Activated naive CD4-positive, alpha-beta T cell treated with anti-CD3 and anti-CD28 coated beads for 36 hours (primary cell): ENCODE measurements at regions of chr12 and their contacts with region 1.

Region 1: GRCh38 chr12:62603061-62603810 is 136.6 kb downstream of the MON2 start:
- DNase-seq: peak; percentile 79
- H3K4me3 Mint-ChIP-seq: peak overlapping the region; percentile 86
- H3K27ac Mint-ChIP-seq: peak overlapping the region; percentile 99
- H3K4me1 Mint-ChIP-seq: peaks cover 35% of the 10 kb centered on the region
- H3K27me3 Mint-ChIP-seq: no peaks in the 10 kb centered on the region

Region 2: DNA sequence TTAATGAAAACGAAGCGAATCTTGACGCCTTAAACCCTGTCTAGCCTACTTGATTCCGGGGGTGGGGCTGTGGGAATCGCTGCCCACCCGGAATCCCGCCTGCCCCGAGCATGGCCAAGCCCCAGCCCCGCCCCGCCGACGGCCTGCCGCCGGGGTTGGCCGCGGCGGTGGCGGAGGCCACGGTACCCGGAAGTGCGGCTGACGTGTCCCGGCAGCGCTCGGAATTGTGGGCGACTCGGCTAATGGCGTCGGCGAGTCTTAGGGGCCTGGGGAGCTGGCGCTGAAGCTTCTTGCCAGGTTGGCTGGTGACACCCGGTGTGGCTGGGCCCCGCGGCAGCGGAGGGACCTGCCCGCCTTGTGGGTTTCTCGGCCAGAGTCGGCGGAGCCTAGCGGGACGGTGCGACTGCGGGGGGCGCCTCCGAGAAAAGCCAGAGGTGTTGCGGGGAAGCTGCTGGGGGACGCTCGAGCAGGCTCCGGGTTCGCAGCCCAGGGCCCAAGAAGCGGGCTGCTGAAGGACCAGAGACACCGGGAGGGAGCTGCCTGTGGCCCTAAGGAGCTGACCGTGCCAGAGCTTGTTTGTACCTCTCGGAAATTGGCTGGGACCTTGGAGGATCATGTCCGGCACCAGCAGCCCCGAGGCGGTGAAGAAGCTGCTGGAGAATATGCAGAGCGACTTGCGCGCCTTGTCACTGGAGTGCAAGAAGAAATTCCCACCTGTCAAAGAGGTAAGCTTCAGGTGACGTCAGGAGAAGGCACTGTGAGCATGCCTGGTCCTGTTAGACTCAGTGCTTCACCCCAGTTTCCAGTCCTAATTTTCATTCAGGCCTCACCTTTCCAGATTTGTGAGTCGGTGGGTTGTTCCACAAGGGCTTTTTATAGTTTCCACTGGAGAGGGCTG is 136.4 kb before region 1 on chr12 and contains the start of gene MON2:
- CTCF ChIA-PET with region 1: no interaction called
- intact Hi-C with region 1: loop called (anchors 1 kb)
- DNase-seq: peak; percentile 87
- H3K4me3 Mint-ChIP-seq: peak within 1 kb of the TSS; percentile 74
- H3K27ac Mint-ChIP-seq: peak within 1 kb of the TSS; percentile 88
- H3K4me1 Mint-ChIP-seq: peaks cover 15% of the 10 kb centered on the region
- H3K27me3 Mint-ChIP-seq: no peaks in the 10 kb centered on the region
- total RNA-seq, gene MON2: 29.2 to 29.8 TPM

Region 3: DNA sequence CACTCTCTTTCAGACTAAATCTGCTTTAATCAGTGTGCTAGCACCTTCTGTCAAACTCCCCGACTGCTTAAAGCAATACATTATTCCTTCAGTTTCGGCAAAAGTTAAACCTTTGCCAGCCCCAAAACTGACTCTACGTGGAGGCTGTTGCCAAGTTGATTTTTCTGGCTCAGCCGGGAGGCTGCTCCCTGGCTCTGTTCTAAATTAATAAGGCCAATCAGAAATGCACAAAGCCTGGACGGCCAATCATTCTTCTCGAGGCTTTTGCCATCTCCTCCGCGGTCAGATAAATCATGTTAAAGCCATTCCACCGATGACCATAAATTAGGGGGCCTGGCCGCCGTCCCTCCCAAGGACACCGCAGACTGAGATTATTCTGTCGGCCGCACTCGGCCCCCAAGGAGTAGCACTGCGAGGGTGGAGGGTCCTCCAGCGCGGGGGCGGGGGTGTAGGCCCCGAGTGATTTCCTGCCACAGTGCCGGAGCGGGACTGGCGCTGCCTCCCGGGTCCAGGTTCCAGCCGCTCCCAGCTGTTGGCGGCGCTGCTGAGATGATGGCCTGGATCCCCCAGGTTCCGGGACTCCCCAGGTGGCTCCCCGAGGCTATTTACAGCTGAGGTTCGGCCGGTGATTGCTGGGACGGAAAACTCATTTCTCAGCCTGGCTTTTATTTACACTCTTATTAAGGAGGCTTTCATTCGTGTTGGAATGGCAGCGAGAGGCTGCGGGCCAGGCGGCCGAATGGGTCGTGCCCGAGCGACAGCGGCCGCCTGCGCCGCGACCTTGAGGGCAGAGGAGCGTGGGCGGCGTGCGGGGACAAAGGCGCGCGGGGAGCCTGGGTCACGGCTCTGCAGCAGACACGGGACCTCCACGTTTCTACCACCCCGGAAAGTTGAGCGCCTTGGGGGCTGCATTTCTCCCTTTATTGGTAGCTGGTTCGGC is 28.5 kb after region 1 on chr12:
- CTCF ChIA-PET with region 1: interaction called, 3 read pairs
- intact Hi-C with region 1: loop called (anchors 2 kb)
- DNase-seq: peak; percentile 61
- H3K4me3 Mint-ChIP-seq: peak overlapping the region; percentile 67
- H3K27ac Mint-ChIP-seq: no peak overlapping the region
- H3K4me1 Mint-ChIP-seq: peaks cover 7% of the 10 kb centered on the region
- H3K27me3 Mint-ChIP-seq: peaks cover 74% of the 10 kb centered on the region

Region 4: GRCh38 chr12:62793256-62794217 is 190.3 kb after region 1 on chr12:
- CTCF ChIA-PET with region 1: interaction called, 10 read pairs
- intact Hi-C with region 1: loop called (anchors 1 kb)
- DNase-seq: peak; percentile 83
- H3K4me3 Mint-ChIP-seq: no peak overlapping the region
- H3K27ac Mint-ChIP-seq: no peak overlapping the region
- H3K4me1 Mint-ChIP-seq: no peaks in the 10 kb centered on the region
- H3K27me3 Mint-ChIP-seq: no peaks in the 10 kb centered on the region

Region 5: DNA sequence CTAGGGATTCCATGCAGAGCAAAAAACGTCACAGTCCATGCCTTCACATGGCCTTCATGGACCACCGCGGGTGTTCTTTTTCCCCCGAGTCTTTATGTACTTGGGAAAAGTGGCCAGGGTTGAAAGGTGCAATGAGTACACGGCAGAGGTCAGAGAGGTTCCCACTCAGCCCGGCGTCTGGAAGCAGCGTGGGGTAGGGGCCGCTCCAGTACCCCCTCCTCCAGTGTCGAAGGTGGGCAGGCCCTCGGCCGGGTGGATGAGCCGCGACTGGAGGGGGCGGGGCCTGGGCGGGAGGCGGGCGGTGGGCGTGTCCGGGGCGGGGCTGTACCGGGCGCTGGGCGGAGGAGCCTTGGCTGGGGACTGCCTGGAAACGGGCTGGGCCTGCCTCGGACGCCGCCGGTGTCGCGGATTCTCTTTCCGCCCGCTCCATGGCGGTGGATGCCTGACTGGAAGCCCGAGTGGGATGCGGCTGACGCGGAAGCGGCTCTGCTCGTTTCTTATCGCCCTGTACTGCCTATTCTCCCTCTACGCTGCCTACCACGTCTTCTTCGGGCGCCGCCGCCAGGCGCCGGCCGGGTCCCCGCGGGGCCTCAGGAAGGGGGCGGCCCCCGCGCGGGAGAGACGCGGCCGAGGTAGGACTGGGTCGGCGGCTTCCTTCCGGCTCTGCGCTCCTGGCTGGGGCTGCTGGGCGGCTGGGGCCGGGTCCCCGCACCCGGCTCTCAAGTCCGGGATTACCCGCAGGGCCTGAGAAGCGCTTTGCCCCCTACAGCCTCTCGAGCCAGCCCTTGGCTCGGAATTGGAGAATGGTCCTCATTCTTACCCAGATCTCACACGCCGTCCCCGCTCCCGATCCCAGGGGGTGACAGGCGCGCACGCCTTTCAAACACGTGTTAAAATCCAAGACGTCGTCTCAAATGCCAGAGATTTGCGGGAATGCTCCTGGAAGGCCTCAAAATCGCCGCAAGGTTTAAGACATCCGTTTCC is 1176.6 kb after region 1 on chr12 and contains the start of gene RXYLT1:
- CTCF ChIA-PET with region 1: no interaction called
- intact Hi-C with region 1: loop called (anchors 10 kb)
- DNase-seq: peak; percentile 85
- H3K4me3 Mint-ChIP-seq: peak within 1 kb of the TSS; percentile 98
- H3K27ac Mint-ChIP-seq: peak within 1 kb of the TSS; percentile 91
- H3K4me1 Mint-ChIP-seq: peaks cover 18% of the 10 kb centered on the region
- H3K27me3 Mint-ChIP-seq: no peaks in the 10 kb centered on the region
- total RNA-seq, gene RXYLT1: 9.8 to 12.7 TPM